Dendritic cell treated with granulocyte-macrophage colony-stimulating factor and Interleukin-4, amounts not matched to agents 40 ng/mL and 50 ng/mL, for 4 days (primary cell): ENCODE measurements at regions of chr1 and their contacts with region 1.

Region 1: GRCh38 chr1:110407260-110408210 is at the start of gene LAMTOR5:
- H3K4me3 Mint-ChIP-seq: peak within 1 kb of the TSS; percentile 100
- H3K27ac Mint-ChIP-seq: peak within 1 kb of the TSS; percentile 100
- H3K4me1 Mint-ChIP-seq: peaks cover 19% of the 10 kb centered on the region
- H3K27me3 Mint-ChIP-seq: no peaks in the 10 kb centered on the region

Region 2: DNA sequence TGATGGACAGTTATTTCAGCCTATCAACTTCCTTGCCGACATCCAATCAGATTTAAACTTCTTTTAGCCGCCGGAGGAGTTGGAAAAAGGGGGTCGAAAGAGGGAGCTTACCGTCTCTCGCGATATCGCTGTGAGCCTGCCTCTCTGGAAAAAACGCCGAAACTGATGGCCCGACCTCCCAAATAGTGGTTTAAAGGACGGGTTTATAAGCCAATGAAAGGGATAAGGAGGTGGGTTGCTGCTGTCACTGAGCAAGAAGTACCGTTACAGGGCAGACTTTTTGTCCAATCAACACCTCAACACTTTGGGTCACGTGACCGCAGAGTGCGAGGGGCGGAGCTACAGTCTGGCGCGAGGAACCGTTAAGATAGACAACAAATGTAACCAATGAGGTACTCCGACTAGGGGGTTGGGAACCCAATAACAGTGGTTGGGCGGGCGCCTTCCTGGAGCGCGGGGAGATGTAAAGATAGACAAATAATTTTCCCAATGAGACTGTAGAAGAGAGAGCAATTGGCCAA is 68.6 kb before region 1 on chr1 and contains the start of gene RBM15:
- intact Hi-C with region 1: loop called (anchors 2 kb)
- H3K4me3 Mint-ChIP-seq: no peak within 1 kb of the TSS
- H3K27ac Mint-ChIP-seq: no peak within 1 kb of the TSS
- H3K4me1 Mint-ChIP-seq: peaks cover 60% of the 10 kb centered on the region
- H3K27me3 Mint-ChIP-seq: no peaks in the 10 kb centered on the region

Region 3: DNA sequence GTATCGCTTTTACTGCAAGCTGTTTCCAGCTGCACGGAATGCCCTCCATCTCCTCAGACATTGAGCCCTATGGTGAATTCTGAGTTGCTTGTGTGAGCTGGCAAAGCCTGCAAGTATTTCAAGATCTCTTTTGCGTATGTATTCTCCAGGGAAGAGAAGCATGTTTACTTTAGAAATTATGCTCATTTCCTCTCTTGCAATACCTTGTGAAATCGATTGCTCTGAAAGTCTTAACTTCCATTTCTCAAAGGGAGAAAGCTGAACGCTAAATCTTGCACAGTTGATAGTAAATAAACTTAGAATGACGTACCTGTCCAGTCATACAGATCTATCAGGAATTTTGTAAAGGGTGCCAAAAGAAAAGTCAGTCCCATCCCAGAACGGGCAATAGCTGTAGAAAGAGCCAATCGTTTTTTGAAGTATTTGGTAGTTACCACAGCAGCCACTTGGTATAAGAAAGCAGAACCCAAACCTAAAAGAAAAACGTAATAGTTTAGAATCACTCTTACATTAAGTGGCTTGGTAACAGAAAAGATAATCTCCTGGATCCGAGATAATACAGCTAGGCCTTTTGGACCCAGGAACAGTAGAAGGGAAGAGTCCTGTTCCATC is 26.8 kb before region 1 on chr1:
- intact Hi-C with region 1: loop called (anchors 2 kb)
- H3K4me3 Mint-ChIP-seq: no peak overlapping the region
- H3K27ac Mint-ChIP-seq: peak overlapping the region; percentile 37
- H3K4me1 Mint-ChIP-seq: peaks cover 64% of the 10 kb centered on the region
- H3K27me3 Mint-ChIP-seq: no peaks in the 10 kb centered on the region